ENCODE measurements at regions of chr17 and their contacts with region 1.

Region 1: GRCh38 chr17:7989781-7990655 is 12.4 kb upstream of the GUCY2D start:
- DNase-seq: peak; percentile 85 to 94 (median 88)
- H3K4me3 ChIP-seq: peak overlapping the region in 1 of 2 donors; percentile 58
- H3K4me3 Mint-ChIP-seq: peak overlapping the region; percentile 76 to 90 (median 84)
- H3K27ac ChIP-seq: peak overlapping the region; percentile 35
- H3K27ac Mint-ChIP-seq: peak overlapping the region; percentile 63 to 92 (median 87)
- H3K4me1 ChIP-seq: peaks cover 16% of the 10 kb centered on the region
- H3K4me1 Mint-ChIP-seq: peaks cover 12 to 33% (median 19%) of the 10 kb centered on the region in 4 donors
- H3K27me3 ChIP-seq: no peaks in the 10 kb centered on the region
- H3K27me3 Mint-ChIP-seq: peaks cover 0 to 1% of the 10 kb centered on the region in 2 donors

Region 2: GRCh38 chr17:7825206-7825990 is 164.6 kb before region 1 on chr17:
- CTCF ChIA-PET with region 1: interaction called, 19 read pairs
- POLR2A ChIA-PET with region 1: no interaction called
- intact Hi-C with region 1: loop called (anchors 1 kb)
- DNase-seq: no peak
- H3K4me3 ChIP-seq: no peak overlapping the region
- H3K4me3 Mint-ChIP-seq: no peak overlapping the region
- H3K27ac ChIP-seq: no peak overlapping the region
- H3K27ac Mint-ChIP-seq: no peak overlapping the region
- H3K4me1 ChIP-seq: no peaks in the 10 kb centered on the region
- H3K4me1 Mint-ChIP-seq: peaks cover 0 to 3% (median 0%) of the 10 kb centered on the region in 4 donors
- H3K27me3 ChIP-seq: no peaks in the 10 kb centered on the region
- H3K27me3 Mint-ChIP-seq: peaks cover 0 to 1% of the 10 kb centered on the region in 2 donors

Region 3: DNA sequence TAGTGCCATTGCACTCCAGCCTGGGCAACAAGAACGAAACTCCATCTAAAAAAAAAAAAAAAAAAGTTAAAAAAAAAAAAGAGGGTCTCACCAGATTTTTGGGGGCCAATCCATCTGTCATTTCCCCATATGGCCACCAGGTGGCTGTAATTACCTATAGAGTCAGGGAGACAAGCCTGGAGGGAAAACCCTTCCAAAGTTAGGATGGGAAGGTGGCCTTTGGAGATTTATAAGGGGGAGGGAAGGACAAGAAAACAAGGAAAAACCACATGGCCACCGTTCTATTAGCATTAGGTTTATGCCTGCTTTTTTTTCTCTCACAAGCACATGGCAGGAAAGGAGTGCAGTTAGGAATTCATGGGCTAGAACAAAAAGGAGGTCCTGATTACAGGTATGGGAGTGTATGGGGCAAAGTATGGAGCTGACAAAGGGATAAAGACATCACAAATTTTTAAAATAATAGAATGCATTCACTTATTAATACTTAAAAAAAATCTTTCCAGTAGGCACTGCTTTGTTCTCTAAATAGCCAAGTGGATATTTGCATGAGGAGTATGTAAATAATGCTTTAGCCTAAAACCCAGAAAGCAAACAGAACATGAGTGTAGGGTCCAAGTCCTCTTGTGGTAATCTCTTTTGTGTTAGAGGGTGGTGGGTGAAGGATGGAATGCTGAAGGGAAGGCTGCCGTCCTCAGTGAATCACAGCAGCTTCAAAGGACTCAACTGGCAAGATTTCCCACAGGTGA is 127.2 kb before region 1 on chr17:
- CTCF ChIA-PET with region 1: interaction called, 311 read pairs
- POLR2A ChIA-PET with region 1: interaction called, 30 read pairs
- intact Hi-C with region 1: loop called (anchors 1 kb)
- DNase-seq: peak; percentile 35 to 58 (median 41)
- H3K4me3 ChIP-seq: no peak overlapping the region
- H3K4me3 Mint-ChIP-seq: no peak overlapping the region
- H3K27ac ChIP-seq: no peak overlapping the region
- H3K27ac Mint-ChIP-seq: peak overlapping the region in 5 of 7 donors; percentile 11 to 80 (median 15)
- H3K4me1 ChIP-seq: peaks cover 27% of the 10 kb centered on the region
- H3K4me1 Mint-ChIP-seq: peaks cover 18 to 31% (median 22%) of the 10 kb centered on the region in 4 donors
- H3K27me3 ChIP-seq: no peaks in the 10 kb centered on the region
- H3K27me3 Mint-ChIP-seq: no peaks in the 10 kb centered on the region

Region 4: DNA sequence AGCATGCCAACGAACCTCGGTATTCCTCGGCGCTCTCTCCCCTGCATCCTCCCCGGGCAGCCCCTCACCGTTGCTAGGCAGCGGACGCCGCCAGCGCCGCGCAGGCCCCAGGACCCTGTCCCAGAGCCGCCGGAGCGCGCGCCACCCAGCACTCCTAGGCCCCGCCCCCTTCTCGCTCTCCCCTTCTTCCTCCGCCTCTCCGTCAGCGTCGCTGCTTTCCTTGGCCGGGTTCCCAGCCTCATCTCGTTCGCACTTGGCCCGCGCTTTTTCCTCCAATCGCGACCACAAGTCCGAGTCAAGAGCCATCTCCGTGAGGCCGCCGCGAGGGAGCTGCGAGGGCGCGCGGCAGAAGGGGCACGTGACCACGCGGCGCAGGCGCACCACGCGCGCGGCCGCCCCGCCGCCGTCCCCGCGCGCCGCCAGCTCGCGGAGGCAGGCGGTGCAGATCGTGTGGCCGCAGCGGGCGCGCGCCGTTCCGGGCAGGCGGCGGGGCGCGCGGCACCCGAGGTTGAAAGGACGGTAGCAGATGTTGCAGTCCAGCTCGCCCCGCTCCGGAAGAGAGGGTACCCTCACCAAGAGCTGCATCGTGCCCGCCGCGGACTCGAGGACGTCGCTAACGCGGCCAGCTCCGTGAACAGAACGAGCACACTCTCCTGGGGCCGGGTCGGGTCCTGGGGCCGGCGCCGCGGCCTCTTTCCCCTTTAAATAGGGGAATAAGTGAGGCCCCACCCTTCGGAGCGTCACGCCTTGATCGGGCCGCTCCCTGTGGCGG is 74.2 kb before region 1 on chr17 and contains the start of gene RNF227:
- CTCF ChIA-PET with region 1: interaction called, 219 read pairs
- POLR2A ChIA-PET with region 1: interaction called, 87 read pairs
- intact Hi-C with region 1: loop called (anchors 1 kb)
- DNase-seq: peak; percentile 84 to 88 (median 84)
- H3K4me3 ChIP-seq: peak within 1 kb of the TSS; percentile 33 to 71
- H3K4me3 Mint-ChIP-seq: peak within 1 kb of the TSS; percentile 88 to 95 (median 90)
- H3K27ac ChIP-seq: peak within 1 kb of the TSS; percentile 67
- H3K27ac Mint-ChIP-seq: peak within 1 kb of the TSS; percentile 91 to 95 (median 93)
- H3K4me1 ChIP-seq: peaks cover 26% of the 10 kb centered on the region
- H3K4me1 Mint-ChIP-seq: peaks cover 19 to 34% (median 24%) of the 10 kb centered on the region in 4 donors
- H3K27me3 ChIP-seq: no peaks in the 10 kb centered on the region
- H3K27me3 Mint-ChIP-seq: no peaks in the 10 kb centered on the region
- total RNA-seq, gene RNF227: 6.7 to 7.4 TPM

Region 5: GRCh38 chr17:7944326-7944725 is 45.7 kb before region 1 on chr17:
- CTCF ChIA-PET with region 1: interaction called, 16 read pairs
- POLR2A ChIA-PET with region 1: no interaction called
- intact Hi-C with region 1: no loop called
- DNase-seq: no peak
- H3K4me3 ChIP-seq: no peak overlapping the region
- H3K4me3 Mint-ChIP-seq: no peak overlapping the region
- H3K27ac ChIP-seq: no peak overlapping the region
- H3K27ac Mint-ChIP-seq: peak overlapping the region in 1 of 7 donors; percentile 74
- H3K4me1 ChIP-seq: no peaks in the 10 kb centered on the region
- H3K4me1 Mint-ChIP-seq: no peaks in the 10 kb centered on the region
- H3K27me3 ChIP-seq: no peaks in the 10 kb centered on the region
- H3K27me3 Mint-ChIP-seq: no peaks in the 10 kb centered on the region

Region 6: DNA sequence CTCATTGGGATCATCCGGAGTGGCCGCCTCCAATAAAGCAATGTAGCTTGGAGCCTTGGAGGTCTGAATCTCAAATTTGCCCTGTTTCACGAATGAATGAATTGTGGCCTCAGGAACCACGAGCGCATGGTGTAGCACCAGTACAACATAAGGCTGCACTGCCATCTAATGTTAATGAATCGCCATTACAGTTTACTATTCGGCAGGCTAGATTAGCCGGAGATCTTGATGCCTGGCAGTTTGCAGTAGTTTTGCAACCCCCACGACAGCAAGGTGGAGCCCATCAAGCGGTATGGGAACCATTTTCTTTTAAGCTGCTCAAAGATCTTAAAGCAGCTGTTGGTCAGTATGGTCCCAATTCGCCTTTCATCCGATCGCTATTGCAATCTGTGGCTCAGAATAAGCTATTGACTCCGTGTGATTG is 67.7 kb after region 1 on chr17:
- CTCF ChIA-PET with region 1: interaction called, 23 read pairs
- POLR2A ChIA-PET with region 1: interaction called, 6 read pairs
- intact Hi-C with region 1: loop called (anchors 1 kb)
- DNase-seq: peak; percentile 63 to 74 (median 69)
- H3K4me3 ChIP-seq: no peak overlapping the region
- H3K4me3 Mint-ChIP-seq: no peak overlapping the region
- H3K27ac ChIP-seq: no peak overlapping the region
- H3K27ac Mint-ChIP-seq: no peak overlapping the region
- H3K4me1 ChIP-seq: peaks cover 7% of the 10 kb centered on the region
- H3K4me1 Mint-ChIP-seq: peaks cover 1 to 16% (median 3%) of the 10 kb centered on the region in 4 donors
- H3K27me3 ChIP-seq: peaks cover 27% of the 10 kb centered on the region
- H3K27me3 Mint-ChIP-seq: peaks cover 31 to 32% of the 10 kb centered on the region in 2 donors